ENCODE measurements at regions of chr10 and their contacts with region 1.

Region 1: DNA sequence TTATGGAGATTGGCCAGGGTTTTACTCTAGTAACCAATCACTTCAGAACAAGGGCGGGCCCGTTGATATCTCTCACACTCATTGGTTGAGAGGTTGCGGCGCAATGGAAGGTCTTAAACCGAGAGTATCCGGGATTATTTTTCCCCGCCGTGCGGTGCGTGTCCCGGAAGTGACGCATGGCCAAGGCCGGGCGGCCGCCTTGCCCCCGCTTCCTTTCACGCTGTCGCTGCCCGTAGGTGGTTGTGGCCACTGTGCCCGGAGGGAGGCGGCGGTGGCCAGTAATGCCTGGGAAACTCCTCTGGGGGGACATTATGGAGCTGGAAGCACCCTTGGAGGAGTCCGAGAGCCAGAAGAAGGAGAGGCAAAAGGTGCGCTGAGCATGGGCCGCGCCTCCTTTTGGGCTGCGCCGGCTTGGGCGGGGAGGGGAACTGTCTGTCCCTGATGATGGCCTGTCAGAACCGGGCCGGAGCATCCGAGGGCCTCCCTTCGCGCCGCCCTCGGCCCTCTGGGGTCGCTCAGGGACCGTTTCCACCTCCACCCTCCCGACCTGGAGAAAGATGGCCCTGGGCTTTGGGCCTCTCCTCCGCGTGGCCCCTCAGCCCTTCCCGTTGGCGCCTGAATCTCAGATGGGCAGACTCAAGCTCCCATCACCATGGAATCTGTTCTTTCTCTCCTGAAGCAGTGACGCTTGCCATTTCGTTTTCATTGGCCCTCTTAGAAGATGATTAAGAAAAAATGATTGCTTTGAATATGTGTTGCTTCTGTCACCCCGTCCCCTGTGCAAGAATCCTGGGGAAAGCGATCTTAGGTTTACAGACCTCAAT is at the start of gene DDX50:
- DNase-seq: peak; percentile 96 to 100 (median 98)

Region 2: GRCh38 chr10:67849331-67850011 is 1051.8 kb before region 1 on chr10:
- intact Hi-C with region 1: loop called (anchors 10 kb)
- DNase-seq: peak; percentile 92 to 99 (median 97)

Region 3: GRCh38 chr10:68406815-68407548 is 494.3 kb before region 1 on chr10 and contains the start of gene RUFY2:
- intact Hi-C with region 1: loop called (anchors 5 kb)
- DNase-seq: peak; percentile 62 to 97 (median 78)

Region 4: DNA sequence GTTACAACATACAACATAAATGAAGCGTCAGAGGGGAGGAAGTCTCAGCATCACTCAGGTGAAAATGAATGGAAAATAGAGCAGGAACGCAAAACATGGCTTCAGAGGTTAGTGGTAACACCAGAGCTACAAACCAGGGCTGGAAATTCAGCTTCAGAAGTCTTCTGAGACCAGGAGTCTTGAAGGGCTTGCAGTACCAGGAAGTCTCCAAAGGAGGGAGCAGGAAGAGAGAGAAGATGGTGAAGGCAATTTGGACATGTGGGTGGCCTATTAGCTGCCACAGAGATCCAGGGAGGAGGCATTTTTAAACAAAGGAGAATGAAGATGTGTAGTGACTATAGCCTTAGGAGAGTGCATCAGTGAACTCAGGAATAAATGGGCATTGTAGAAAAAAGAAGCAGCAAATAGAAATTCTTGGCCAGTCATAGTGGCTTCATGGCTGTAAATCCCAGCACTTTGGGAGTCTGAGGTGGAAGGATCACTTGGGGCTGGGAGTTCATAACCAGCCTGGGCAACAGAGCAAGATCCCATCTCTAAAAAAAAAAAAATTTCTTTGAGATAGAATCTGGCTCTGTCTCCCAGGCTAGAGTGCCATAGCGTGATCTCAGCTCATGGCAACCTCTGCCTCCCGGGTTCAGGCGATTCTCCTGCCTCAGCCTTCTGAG is 350.4 kb before region 1 on chr10:
- intact Hi-C with region 1: loop called (anchors 10 kb)
- DNase-seq: peak in 3 of 10 donors; percentile 27 to 36 (median 29)

Region 5: GRCh38 chr10:68720793-68721672 is 180.3 kb before region 1 on chr10 and contains the start of gene CCAR1:
- intact Hi-C with region 1: loop called (anchors 10 kb)
- DNase-seq: peak; percentile 92 to 99 (median 94)

Region 6: GRCh38 chr10:68826764-68827591 is 74.3 kb before region 1 on chr10 and contains the start of gene STOX1:
- intact Hi-C with region 1: loop called (anchors 5 kb)
- DNase-seq: peak in 9 of 10 donors; percentile 26 to 89 (median 38)

Measured in posterior cingulate gyrus (tissue), 11 donors.